Esophagus squamous epithelium (tissue), 5 donors: ENCODE measurements at regions of chr16 and their contacts with region 1.

Region 1: GRCh38 chr16:29784901-29785500 is 5.5 kb upstream of the KIF22 start:
- DNase-seq: no peak
- H3K4me3 ChIP-seq: peak overlapping the region; percentile 4 to 45 (median 28)
- H3K27ac ChIP-seq: peak overlapping the region in 1 of 4 donors; percentile 23
- H3K4me1 ChIP-seq: peaks cover 7 to 29% (median 14%) of the 10 kb centered on the region in 3 donors
- H3K27me3 ChIP-seq: peaks cover 0 to 5% (median 0%) of the 10 kb centered on the region in 4 donors
- CTCF ChIP-seq: peak; percentile 49 to 83 (median 72)
- POLR2A ChIP-seq: no peak

Region 2: GRCh38 chr16:29719063-29719462 is 65.9 kb before region 1 on chr16:
- intact Hi-C with region 1: loop called (anchors 5 kb)
- DNase-seq: no peak
- H3K4me3 ChIP-seq: no peak overlapping the region
- H3K27ac ChIP-seq: no peak overlapping the region
- H3K4me1 ChIP-seq: peaks cover 0 to 13% (median 0%) of the 10 kb centered on the region in 3 donors
- H3K27me3 ChIP-seq: no peaks in the 10 kb centered on the region
- CTCF ChIP-seq: no peak
- POLR2A ChIP-seq: no peak

Region 3: GRCh38 chr16:29883987-29884386 is 99.0 kb after region 1 on chr16:
- intact Hi-C with region 1: no loop called
- DNase-seq: no peak
- H3K4me3 ChIP-seq: no peak overlapping the region
- H3K27ac ChIP-seq: no peak overlapping the region
- H3K4me1 ChIP-seq: no peaks in the 10 kb centered on the region
- H3K27me3 ChIP-seq: peaks cover 0 to 21% (median 0%) of the 10 kb centered on the region in 4 donors
- CTCF ChIP-seq: no peak
- POLR2A ChIP-seq: no peak

Region 4: GRCh38 chr16:29962344-29962994 is 177.5 kb after region 1 on chr16:
- intact Hi-C with region 1: no loop called
- DNase-seq: no peak
- H3K4me3 ChIP-seq: peak overlapping the region; percentile 70 to 85 (median 76)
- H3K27ac ChIP-seq: peak overlapping the region; percentile 94 to 97 (median 94)
- H3K4me1 ChIP-seq: peaks cover 0 to 32% (median 11%) of the 10 kb centered on the region in 3 donors
- H3K27me3 ChIP-seq: no peaks in the 10 kb centered on the region
- CTCF ChIP-seq: no peak
- POLR2A ChIP-seq: no peak